Psoas muscle (tissue), 8 donors: ENCODE measurements at regions of chr19 and their contacts with region 1.

Region 1: GRCh38 chr19:30682999-30683536 is 310.9 kb downstream of the ZNF536 start:
- DNase-seq: peak; percentile 71 to 82
- ATAC-seq: peak; percentile 63 to 82 (median 80)
- H3K4me3 ChIP-seq: no peak overlapping the region
- H3K27ac ChIP-seq: no peak overlapping the region
- H3K4me1 ChIP-seq: no peaks in the 10 kb centered on the region
- H3K27me3 ChIP-seq: peaks cover 0 to 23% (median 3%) of the 10 kb centered on the region in 3 donors
- CTCF ChIP-seq: peak; percentile 89

Region 2: GRCh38 chr19:30640252-30640965 is 42.7 kb before region 1 on chr19:
- intact Hi-C with region 1: no loop called
- DNase-seq: no peak
- ATAC-seq: no peak
- H3K4me3 ChIP-seq: no peak overlapping the region
- H3K27ac ChIP-seq: no peak overlapping the region
- H3K4me1 ChIP-seq: no peaks in the 10 kb centered on the region
- H3K27me3 ChIP-seq: no peaks in the 10 kb centered on the region
- CTCF ChIP-seq: no peak

Region 3: DNA sequence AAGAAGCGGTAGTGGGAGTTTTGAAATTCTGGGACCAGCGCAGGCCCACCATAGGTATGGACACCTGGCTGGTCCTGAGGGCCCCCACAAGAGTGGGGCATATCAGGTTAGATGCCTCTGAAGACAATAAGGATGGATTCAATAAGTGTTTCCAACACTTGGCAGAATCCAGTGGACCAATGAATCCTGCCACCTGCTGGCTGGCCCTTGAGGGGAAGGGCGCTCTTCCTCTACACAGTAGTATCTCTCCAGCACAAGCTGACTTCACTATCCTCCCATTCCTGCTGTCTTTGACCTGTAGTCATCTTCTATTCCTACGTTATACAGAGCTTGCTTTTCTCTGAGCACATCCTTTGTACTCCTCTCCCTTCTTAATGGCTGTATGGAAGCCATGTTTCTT is 865.9 kb after region 1 on chr19:
- intact Hi-C with region 1: loop called in 1 of 2 experiments (anchors 5 kb)
- DNase-seq: no peak
- ATAC-seq: no peak
- H3K4me3 ChIP-seq: no peak overlapping the region
- H3K27ac ChIP-seq: no peak overlapping the region
- H3K4me1 ChIP-seq: no peaks in the 10 kb centered on the region
- H3K27me3 ChIP-seq: no peaks in the 10 kb centered on the region
- CTCF ChIP-seq: peak; percentile 36